Right ventricle myocardium inferior (tissue), 1 donor: ENCODE measurements at regions of chr4 and their contacts with region 1.

Region 1: DNA sequence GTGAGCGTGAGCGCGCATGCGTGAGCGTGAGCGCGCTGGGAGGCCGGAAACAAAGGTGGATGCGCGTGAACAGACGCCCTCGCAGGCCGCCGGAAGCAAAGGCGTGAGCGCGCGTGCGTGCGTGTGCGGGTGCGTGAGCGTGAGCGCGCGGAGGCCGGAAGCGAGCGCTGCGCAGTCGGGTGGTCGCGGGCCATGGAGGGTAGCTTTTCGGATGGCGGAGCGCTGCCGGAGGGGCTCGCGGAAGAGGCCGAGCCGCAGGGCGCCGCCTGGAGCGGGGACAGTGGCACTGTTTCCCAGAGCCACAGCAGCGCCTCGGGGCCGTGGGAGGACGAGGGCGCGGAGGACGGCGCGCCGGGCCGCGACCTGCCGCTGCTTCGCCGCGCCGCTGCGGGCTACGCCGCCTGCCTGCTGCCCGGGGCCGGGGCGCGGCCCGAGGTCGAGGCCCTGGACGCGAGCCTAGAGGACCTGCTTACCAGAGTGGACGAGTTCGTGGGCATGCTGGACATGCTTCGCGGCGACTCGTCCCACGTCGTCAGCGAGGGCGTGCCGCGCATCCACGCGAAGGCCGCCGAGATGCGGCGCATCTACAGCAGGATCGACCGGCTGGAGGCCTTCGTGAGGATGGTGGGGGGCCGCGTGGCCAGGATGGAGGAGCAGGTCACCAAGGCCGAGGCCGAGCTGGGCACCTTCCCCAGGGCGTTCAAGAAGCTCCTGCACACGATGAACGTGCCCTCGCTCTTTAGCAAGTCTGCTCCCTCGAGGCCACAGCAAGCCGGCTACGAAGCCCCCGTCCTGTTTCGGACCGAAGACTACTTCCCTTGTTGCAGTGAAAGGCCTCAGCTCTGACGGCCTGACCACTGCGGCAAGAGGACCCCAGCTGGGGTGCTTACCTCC is at the start of gene BLOC1S4:
- DNase-seq: peak; percentile 96
- ATAC-seq: peak; percentile 94
- total RNA-seq, gene BLOC1S4: 6.0 TPM

Region 2: DNA sequence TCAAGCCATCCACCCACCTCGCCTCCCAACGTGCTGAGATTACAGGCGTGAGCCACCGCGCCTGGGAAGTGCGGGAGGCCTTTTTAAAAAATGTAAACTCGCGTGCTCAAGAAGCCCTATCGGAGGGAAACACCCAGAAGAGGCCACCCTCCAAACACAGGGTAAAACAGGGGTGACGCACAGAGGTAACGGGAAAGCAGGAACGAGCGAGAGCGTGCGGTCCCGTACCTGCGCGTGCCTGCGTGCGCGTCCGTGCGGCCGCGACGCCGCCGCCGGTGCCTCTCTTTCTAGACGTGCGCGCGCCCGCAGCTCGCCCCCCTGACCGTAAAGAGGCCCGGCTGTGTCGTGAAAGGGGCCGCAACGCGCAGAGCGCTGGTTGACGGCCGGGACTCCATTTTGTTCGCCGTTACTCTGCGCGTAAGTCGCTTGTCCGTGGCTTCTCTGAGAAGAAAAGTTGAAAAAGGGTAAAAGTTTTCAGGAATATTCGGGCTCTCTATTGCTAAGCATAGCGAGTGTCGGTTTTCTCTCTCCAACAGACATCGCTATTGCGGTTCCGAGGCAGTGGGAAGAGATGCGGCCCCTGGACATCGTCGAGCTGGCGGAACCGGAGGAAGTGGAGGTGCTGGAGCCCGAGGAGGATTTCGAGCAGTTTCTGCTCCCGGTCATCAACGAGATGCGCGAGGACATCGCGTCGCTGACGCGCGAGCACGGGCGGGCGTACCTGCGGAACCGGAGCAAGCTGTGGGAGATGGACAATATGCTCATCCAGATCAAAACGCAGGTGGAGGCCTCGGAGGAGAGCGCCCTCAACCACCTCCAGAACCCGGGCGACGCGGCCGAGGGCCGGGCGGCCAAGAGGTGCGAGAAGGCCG is 75.7 kb before region 1 on chr4 and contains the start of gene MRFAP1:
- intact Hi-C with region 1: loop called (anchors 1 kb)
- DNase-seq: peak; percentile 97
- ATAC-seq: peak; percentile 96
- total RNA-seq, gene MRFAP1: 234 TPM

Region 3: GRCh38 chr4:6873792-6874461 is 157.7 kb after region 1 on chr4:
- intact Hi-C with region 1: loop called (anchors 1 kb)
- DNase-seq: peak; percentile 87
- ATAC-seq: peak; percentile 49

Region 4: GRCh38 chr4:6885951-6886557 is 169.8 kb after region 1 on chr4:
- intact Hi-C with region 1: loop called (anchors 5 kb)
- DNase-seq: peak; percentile 88
- ATAC-seq: peak; percentile 78